ENCODE measurements at regions of chr16 and their contacts with region 1.

Region 1: GRCh38 chr16:69150146-69150865 is 17.9 kb downstream of the UTP4 start:
- DNase-seq: peak; percentile 76
- H3K4me3 Mint-ChIP-seq: no peak overlapping the region
- H3K27ac Mint-ChIP-seq: no peak overlapping the region
- H3K4me1 Mint-ChIP-seq: no peaks in the 10 kb centered on the region
- H3K27me3 Mint-ChIP-seq: no peaks in the 10 kb centered on the region

Region 2: GRCh38 chr16:68752602-68753001 is 397.7 kb before region 1 on chr16:
- CTCF ChIA-PET with region 1: no interaction called
- POLR2A ChIA-PET with region 1: no interaction called
- DNase-seq: peak; percentile 16
- H3K4me3 Mint-ChIP-seq: no peak overlapping the region
- H3K27ac Mint-ChIP-seq: peak overlapping the region; percentile 77
- H3K4me1 Mint-ChIP-seq: peaks cover 44% of the 10 kb centered on the region
- H3K27me3 Mint-ChIP-seq: no peaks in the 10 kb centered on the region

Region 3: DNA sequence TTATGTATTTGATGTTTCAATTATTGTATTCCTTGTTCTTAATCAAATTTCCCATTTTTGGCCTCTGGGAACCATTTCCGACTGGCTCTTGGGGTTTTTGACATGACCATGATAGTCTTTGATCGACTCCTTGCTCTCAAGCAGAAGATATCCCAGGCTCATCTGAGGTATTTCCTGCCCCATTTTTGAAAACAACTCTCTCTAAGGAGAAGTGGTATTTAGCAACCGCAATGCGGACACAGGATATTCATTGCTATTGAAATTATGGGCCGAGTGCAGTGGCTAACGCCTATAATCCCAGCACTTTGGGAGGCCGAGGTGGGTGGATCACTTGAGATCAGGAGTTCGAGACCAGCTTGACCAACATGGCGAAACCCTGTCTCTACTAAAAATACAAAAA is 301.5 kb before region 1 on chr16:
- CTCF ChIA-PET with region 1: no interaction called
- POLR2A ChIA-PET with region 1: no interaction called
- DNase-seq: no peak
- H3K4me3 Mint-ChIP-seq: no peak overlapping the region
- H3K27ac Mint-ChIP-seq: no peak overlapping the region
- H3K4me1 Mint-ChIP-seq: peaks cover 32% of the 10 kb centered on the region
- H3K27me3 Mint-ChIP-seq: no peaks in the 10 kb centered on the region

Region 4: DNA sequence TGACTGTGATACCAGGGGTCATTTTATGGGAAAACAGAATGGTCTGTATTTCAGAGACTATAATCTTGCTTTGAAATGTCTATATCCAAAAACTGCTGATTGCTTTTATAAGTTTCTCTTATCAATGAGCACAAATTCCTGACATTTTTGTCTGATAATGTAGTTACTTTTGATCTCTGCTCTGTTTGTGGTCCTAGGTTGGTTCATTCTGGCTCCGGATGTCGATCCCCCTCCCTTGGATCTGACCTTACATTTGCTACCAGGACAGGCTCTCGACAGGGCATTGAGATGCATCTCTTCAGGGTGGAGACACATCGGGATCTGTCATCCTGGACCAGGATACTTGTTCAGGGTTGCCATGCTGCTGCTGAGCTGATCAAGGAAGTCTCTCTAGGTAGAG is 133.5 kb after region 1 on chr16:
- CTCF ChIA-PET with region 1: interaction called, 18 read pairs
- POLR2A ChIA-PET with region 1: no interaction called
- DNase-seq: no peak
- H3K4me3 Mint-ChIP-seq: no peak overlapping the region
- H3K27ac Mint-ChIP-seq: no peak overlapping the region
- H3K4me1 Mint-ChIP-seq: peaks cover 2% of the 10 kb centered on the region
- H3K27me3 Mint-ChIP-seq: no peaks in the 10 kb centered on the region

Region 5: DNA sequence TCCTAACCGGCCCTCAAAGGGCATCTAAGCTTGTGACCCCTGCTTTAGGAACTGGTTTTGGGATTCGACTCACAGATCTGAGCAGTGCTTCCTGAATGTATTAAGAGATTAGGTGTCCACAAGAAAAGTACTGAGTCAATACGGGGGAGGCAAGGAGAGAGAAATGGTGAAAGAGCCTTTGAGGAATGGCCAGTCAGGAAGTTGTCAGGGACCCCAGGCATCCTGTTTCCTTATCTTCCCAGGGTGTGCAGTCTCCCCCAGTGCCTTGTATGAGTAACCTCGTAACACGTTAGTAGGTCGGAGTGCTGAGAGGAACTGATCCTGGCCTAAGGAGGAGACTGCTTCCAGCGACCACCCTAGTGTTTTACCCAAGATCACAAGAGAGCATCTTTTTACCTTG is 217.7 kb after region 1 on chr16:
- CTCF ChIA-PET with region 1: no interaction called
- POLR2A ChIA-PET with region 1: no interaction called
- DNase-seq: no peak
- H3K4me3 Mint-ChIP-seq: no peak overlapping the region
- H3K27ac Mint-ChIP-seq: no peak overlapping the region
- H3K4me1 Mint-ChIP-seq: peaks cover 9% of the 10 kb centered on the region
- H3K27me3 Mint-ChIP-seq: no peaks in the 10 kb centered on the region

Measured in activated CD4-positive, alpha-beta T cell treated with anti-CD3 and anti-CD28 coated beads, Interleukin-2, amount 10 ng/mL, durations not matched to agents 7 days and 5 days (primary cell).